ENCODE measurements at regions of chr20 and their contacts with region 1.

Region 1: DNA sequence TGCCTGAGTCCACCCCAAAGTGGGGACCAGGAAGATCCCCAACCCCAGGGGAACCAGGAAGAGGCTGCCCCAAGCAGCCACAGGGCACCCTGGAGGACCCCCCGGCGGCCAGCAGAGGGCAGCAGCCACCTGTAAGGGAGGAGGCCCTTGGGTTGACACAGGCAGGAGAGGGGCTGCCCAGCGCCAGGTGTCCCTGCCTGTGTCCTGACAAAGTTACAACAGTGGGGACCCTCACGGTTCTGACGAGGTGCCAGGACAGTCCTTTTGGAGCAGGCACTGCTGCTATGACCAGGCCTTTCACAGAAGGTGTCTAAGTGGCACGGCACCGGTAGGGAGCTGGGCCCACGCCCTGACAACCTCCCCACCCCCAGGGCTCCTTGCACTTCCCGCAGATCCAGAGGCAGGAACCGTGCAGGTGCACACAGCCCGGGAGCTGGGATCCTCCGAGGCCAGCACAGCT is 176.7 kb downstream of the BMP7 start:
- DNase-seq: peak in 2 of 3 donors; percentile 6 to 19
- H3K4me3 ChIP-seq: no peak overlapping the region
- H3K4me3 Mint-ChIP-seq: no peak overlapping the region
- H3K27ac ChIP-seq: no peak overlapping the region
- H3K27ac Mint-ChIP-seq: no peak overlapping the region
- H3K4me1 ChIP-seq: no peaks in the 10 kb centered on the region
- H3K4me1 Mint-ChIP-seq: peaks cover 2% of the 10 kb centered on the region
- H3K27me3 ChIP-seq: no peaks in the 10 kb centered on the region
- H3K27me3 Mint-ChIP-seq: peaks cover 0 to 8% (median 7%) of the 10 kb centered on the region in 3 donors
- CTCF ChIP-seq: peak; percentile 85

Region 2: GRCh38 chr20:57048027-57048869 is 41.5 kb before region 1 on chr20:
- intact Hi-C with region 1: no loop called
- DNase-seq: no peak
- H3K4me3 ChIP-seq: no peak overlapping the region
- H3K4me3 Mint-ChIP-seq: no peak overlapping the region
- H3K27ac ChIP-seq: no peak overlapping the region
- H3K27ac Mint-ChIP-seq: no peak overlapping the region
- H3K4me1 ChIP-seq: no peaks in the 10 kb centered on the region
- H3K4me1 Mint-ChIP-seq: no peaks in the 10 kb centered on the region
- H3K27me3 ChIP-seq: no peaks in the 10 kb centered on the region
- H3K27me3 Mint-ChIP-seq: peaks cover 0 to 7% (median 1%) of the 10 kb centered on the region in 3 donors
- CTCF ChIP-seq: peak; percentile 71

Region 3: GRCh38 chr20:57346477-57346876 is 256.8 kb after region 1 on chr20:
- intact Hi-C with region 1: loop called in 1 of 2 experiments (anchors 5 kb)
- DNase-seq: peak; percentile 27 to 59 (median 50)
- H3K4me3 ChIP-seq: no peak overlapping the region
- H3K4me3 Mint-ChIP-seq: no peak overlapping the region
- H3K27ac ChIP-seq: no peak overlapping the region
- H3K27ac Mint-ChIP-seq: no peak overlapping the region
- H3K4me1 ChIP-seq: peaks cover under 1 to 3% of the 10 kb centered on the region in 2 donors
- H3K4me1 Mint-ChIP-seq: peaks cover 1% of the 10 kb centered on the region
- H3K27me3 ChIP-seq: peaks cover 18 to 25% of the 10 kb centered on the region in 2 donors
- H3K27me3 Mint-ChIP-seq: peaks cover 15 to 38% (median 23%) of the 10 kb centered on the region in 3 donors
- CTCF ChIP-seq: peak; percentile 81

Measured in CD14-positive monocyte (primary cell).